Panc1 (cell line): ENCODE measurements at regions of chr4 and their contacts with region 1.

Region 1: GRCh38 chr4:163484906-163485305 is 9.6 kb upstream of the TMA16 start:
- DNase-seq: no peak
- ATAC-seq: no peak
- H3K4me3 ChIP-seq: no peak overlapping the region
- H3K27ac ChIP-seq: no peak overlapping the region
- H3K4me1 ChIP-seq: no peaks in the 10 kb centered on the region
- H3K27me3 ChIP-seq: no peaks in the 10 kb centered on the region
- CTCF ChIP-seq: peak; percentile 65

Region 2: DNA sequence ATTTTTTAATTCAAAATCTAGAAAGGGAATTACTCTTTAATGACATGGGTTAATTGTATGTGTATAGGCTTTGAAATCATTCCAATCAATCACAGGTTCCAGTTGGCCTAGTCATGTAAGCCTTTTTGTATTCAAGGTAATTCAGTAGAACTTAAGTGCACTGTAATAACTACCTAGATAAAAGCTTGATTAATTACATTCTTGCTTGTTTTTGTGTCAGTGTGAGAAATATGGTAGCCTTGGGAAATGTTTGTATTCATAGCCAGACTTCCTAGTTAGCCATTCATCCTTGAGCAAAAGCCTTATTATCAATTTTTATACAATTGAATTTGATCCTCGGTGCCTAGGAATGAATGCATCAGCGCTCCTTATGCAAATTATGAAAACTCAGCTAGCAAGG is 44.9 kb before region 1 on chr4:
- CTCF ChIA-PET with region 1: no interaction called
- POLR2A ChIA-PET with region 1: no interaction called
- in situ Hi-C with region 1: no loop called
- intact Hi-C with region 1: no loop called
- DNase-seq: no peak
- ATAC-seq: no peak
- H3K4me3 ChIP-seq: no peak overlapping the region
- H3K27ac ChIP-seq: no peak overlapping the region
- H3K4me1 ChIP-seq: no peaks in the 10 kb centered on the region
- H3K27me3 ChIP-seq: no peaks in the 10 kb centered on the region
- CTCF ChIP-seq: no peak

Region 3: GRCh38 chr4:163544407-163545038 is 59.6 kb after region 1 on chr4:
- CTCF ChIA-PET with region 1: no interaction called
- POLR2A ChIA-PET with region 1: no interaction called
- in situ Hi-C with region 1: no loop called
- intact Hi-C with region 1: loop called (anchors 1 kb)
- DNase-seq: no peak
- ATAC-seq: peak; percentile 77
- H3K4me3 ChIP-seq: peak overlapping the region; percentile 31 to 53
- H3K27ac ChIP-seq: no peak overlapping the region
- H3K4me1 ChIP-seq: no peaks in the 10 kb centered on the region; the same call in 1 of the 2 replicates
- H3K27me3 ChIP-seq: no peaks in the 10 kb centered on the region
- CTCF ChIP-seq: peak; percentile 90